ENCODE measurements at regions of chr7 and their contacts with region 1.

Region 1: DNA sequence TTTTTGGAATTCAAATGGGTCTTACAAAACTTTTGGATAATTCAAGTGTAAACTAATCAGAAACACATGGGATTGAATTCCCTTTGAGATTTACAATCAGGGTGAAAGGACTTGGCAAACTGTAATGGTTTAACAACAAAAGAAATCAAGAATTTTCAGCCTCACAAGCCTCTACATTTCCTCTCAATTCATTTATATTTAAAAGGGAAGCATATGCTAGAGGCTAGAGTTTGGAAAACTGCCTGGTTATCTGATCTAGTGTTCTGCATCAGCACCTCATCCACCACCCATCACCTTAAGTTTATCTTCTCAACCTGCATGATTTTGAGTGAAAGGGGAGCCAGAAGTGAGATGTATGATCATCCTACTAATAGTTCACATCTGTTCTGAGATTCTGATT is 120.7 kb downstream of the TES start:
- DNase-seq: no peak
- ATAC-seq: no peak
- H3K4me3 ChIP-seq: no peak overlapping the region
- H3K27ac ChIP-seq: no peak overlapping the region
- H3K4me1 ChIP-seq: no peaks in the 10 kb centered on the region
- H3K27me3 ChIP-seq: no peaks in the 10 kb centered on the region
- CTCF ChIP-seq: no peak
- POLR2A ChIP-seq: no peak

Region 2: GRCh38 chr7:115582956-115583355 is 748.1 kb before region 1 on chr7:
- in situ Hi-C with region 1: no loop called
- intact Hi-C with region 1: no loop called
- DNase-seq: no peak
- ATAC-seq: no peak
- H3K4me3 ChIP-seq: no peak overlapping the region
- H3K27ac ChIP-seq: no peak overlapping the region
- H3K4me1 ChIP-seq: no peaks in the 10 kb centered on the region
- H3K27me3 ChIP-seq: no peaks in the 10 kb centered on the region
- CTCF ChIP-seq: no peak
- POLR2A ChIP-seq: no peak

Region 3: DNA sequence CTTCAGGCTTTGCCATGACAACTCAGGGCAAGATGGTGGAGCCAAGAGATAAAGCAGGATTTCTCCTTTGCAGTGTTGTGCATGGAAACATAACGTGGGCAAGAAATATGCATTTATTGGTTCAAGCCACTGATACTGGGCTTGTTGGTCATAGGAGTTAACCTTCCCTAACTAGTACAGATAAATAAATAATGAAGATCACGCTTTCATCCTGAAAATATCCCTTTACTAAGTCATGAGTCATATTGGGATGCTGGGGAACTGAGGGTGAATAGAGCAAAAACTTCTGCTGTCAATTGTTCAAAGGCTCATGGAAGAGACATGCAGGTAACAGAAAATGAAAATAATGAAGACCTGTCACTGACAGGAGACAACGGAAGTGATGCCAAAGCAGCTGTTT is 65.1 kb before region 1 on chr7:
- in situ Hi-C with region 1: loop called in 1 of 4 experiments (anchors 5 kb)
- intact Hi-C with region 1: no loop called
- DNase-seq: no peak
- ATAC-seq: no peak
- H3K4me3 ChIP-seq: no peak overlapping the region
- H3K27ac ChIP-seq: no peak overlapping the region
- H3K4me1 ChIP-seq: peaks cover 1 to 5% of the 10 kb centered on the region in 2 donors
- H3K27me3 ChIP-seq: no peaks in the 10 kb centered on the region
- CTCF ChIP-seq: no peak
- POLR2A ChIP-seq: no peak

Region 4: GRCh38 chr7:116367221-116367813 is 36.3 kb after region 1 on chr7:
- in situ Hi-C with region 1: no loop called
- intact Hi-C with region 1: no loop called
- DNase-seq: no peak
- ATAC-seq: no peak
- H3K4me3 ChIP-seq: no peak overlapping the region
- H3K27ac ChIP-seq: no peak overlapping the region
- H3K4me1 ChIP-seq: no peaks in the 10 kb centered on the region
- H3K27me3 ChIP-seq: no peaks in the 10 kb centered on the region
- CTCF ChIP-seq: no peak
- POLR2A ChIP-seq: no peak

Region 5: DNA sequence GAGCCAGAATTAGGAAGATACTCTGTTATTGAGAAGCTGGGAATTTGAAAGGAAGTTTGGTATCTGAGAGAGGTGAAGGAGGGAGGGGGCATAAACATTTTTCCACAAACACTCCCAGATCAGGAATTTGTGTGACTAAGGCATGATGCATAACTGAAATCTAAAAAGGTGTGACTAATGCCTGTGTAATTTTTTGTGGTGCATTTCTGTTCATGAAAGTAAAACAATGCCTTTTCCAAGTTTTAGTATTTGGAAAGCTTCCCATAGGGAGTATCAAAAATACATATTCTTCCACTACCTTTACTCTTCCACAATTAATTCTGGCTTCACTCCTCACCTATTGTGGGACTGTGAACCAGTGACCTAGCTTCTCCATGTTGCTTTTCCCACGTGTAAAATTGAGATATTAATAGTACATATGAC is 112.1 kb after region 1 on chr7:
- in situ Hi-C with region 1: no loop called
- intact Hi-C with region 1: no loop called
- DNase-seq: no peak
- ATAC-seq: no peak
- H3K4me3 ChIP-seq: no peak overlapping the region
- H3K27ac ChIP-seq: peak overlapping the region in 1 of 4 donors; percentile 61
- H3K4me1 ChIP-seq: peaks cover 0 to 5% of the 10 kb centered on the region in 2 donors
- H3K27me3 ChIP-seq: no peaks in the 10 kb centered on the region
- CTCF ChIP-seq: no peak
- POLR2A ChIP-seq: no peak

Region 6: DNA sequence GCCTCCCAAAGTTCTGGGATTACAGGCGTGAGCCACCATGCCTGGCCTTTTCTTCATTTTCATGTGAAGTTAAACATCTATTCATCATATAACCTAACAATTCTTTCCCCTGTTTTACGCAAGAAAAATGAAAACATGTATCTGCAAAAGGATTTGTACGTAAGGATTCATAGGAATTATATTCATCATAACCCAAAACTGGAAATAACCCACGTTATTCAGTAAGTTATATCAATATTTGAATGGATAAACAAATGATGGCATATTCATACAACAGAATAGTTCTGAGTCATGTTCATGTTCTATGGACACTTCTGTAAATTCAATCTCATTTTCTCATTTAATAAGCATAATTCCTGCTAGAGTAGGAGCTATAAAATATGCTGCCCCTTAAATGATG is 133.4 kb after region 1 on chr7:
- in situ Hi-C with region 1: no loop called
- intact Hi-C with region 1: no loop called
- DNase-seq: no peak
- ATAC-seq: no peak
- H3K4me3 ChIP-seq: no peak overlapping the region
- H3K27ac ChIP-seq: no peak overlapping the region
- H3K4me1 ChIP-seq: no peaks in the 10 kb centered on the region
- H3K27me3 ChIP-seq: no peaks in the 10 kb centered on the region
- CTCF ChIP-seq: no peak
- POLR2A ChIP-seq: no peak